ENCODE measurements at regions of chr7 and their contacts with region 1.

Region 1: DNA sequence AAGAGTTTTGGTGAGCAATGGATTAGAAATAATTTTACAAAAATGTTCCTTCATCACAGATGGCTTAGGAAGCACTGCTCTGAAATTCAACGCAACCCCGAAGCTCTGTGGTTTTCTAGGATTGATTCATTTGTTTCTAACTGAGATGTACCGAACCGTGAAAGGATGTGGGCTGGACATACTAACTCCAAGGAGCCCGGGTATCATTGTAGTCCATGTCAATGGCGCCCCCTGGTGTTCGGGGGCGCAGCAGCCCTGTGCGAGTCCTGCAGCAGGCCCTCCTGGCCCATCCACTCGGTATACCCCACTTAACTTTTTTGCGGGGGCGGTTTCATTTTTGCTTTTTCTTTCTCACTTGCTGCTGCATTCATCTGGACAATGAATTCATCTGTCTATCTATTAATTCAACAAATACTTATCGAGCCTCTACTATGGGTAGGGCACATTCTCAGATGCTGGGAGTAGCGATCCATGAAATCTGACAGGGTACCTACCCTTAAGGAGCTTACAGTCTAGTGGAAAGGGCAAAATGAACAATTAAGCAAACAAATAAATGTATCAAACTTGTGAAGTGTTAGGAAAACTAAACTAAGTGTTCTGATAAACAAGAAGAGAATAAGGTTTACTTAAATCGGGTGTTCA is 25.2 kb upstream of the ITPRID1 start:
- DNase-seq: peak; percentile 83
- H3K4me3 ChIP-seq: no peak overlapping the region
- H3K27ac ChIP-seq: no peak overlapping the region
- H3K4me1 ChIP-seq: peaks cover 15% of the 10 kb centered on the region
- H3K27me3 ChIP-seq: no peaks in the 10 kb centered on the region
- CTCF ChIP-seq: peak; percentile 91

Region 2: GRCh38 chr7:31443457-31443856 is 45.2 kb before region 1 on chr7:
- CTCF ChIA-PET with region 1: no interaction called
- POLR2A ChIA-PET with region 1: no interaction called
- intact Hi-C with region 1: loop called (anchors 5 kb)
- DNase-seq: peak; percentile 89
- H3K4me3 ChIP-seq: no peak overlapping the region
- H3K27ac ChIP-seq: peak overlapping the region; percentile 54
- H3K4me1 ChIP-seq: peaks cover 21% of the 10 kb centered on the region
- H3K27me3 ChIP-seq: no peaks in the 10 kb centered on the region
- CTCF ChIP-seq: peak; percentile 83